HEK293 (cell line): ENCODE measurements at regions of chr6 and their contacts with region 1.

Region 1: DNA sequence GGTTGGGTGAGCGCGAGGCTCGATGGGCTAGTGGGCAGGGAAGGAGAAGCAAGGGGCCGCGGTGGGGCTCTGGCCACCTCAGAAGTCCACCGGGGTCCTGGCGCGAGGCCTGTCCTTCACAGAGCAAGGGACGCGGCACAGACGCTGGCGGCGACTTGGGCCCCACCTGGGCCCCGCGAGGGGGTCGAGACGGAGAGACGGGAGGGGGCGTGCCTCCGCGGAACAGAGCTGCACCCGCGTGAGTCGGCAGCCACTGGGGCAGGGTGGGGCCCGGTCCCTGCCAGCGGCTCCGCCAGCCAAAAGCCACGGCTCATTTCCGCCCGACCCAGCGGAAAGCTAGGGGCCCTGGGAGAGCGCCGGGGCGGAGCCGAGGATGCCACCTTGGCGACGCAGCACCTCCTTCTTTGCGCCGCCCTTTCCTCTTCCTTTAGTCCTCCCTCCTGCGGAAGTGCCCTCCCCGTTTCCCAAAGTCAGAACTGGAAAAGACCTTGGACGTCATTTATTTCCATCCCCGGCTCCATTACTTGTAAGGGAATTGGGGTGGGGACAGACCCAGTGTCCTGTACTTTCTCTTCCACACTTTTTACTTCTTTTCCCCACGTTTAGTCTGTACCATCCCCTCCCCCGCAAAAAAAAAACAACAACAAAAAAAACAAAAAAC is at the start of gene CUL7:
- H3K4me3 ChIP-seq: peak within 1 kb of the TSS; percentile 74
- H3K27ac ChIP-seq: peak within 1 kb of the TSS; percentile 85
- H3K4me1 ChIP-seq: peaks cover 9% of the 10 kb centered on the region
- CTCF ChIP-seq: peak; percentile 77; the same call in 1 of the 2 replicates

Region 2: GRCh38 chr6:43021270-43022047 is 32.2 kb before region 1 on chr6 and contains the start of gene RRP36:
- CTCF ChIA-PET with region 1: interaction called, 3 read pairs
- POLR2A ChIA-PET with region 1: interaction called, 20 read pairs
- H3K4me3 ChIP-seq: peak within 1 kb of the TSS; percentile 91
- H3K27ac ChIP-seq: peak within 1 kb of the TSS; percentile 86
- H3K4me1 ChIP-seq: peaks cover 9% of the 10 kb centered on the region
- CTCF ChIP-seq: no peak

Region 3: GRCh38 chr6:43035495-43036194 is 18.0 kb before region 1 on chr6:
- CTCF ChIA-PET with region 1: interaction called, 3 read pairs
- POLR2A ChIA-PET with region 1: interaction called, 14 read pairs
- H3K4me3 ChIP-seq: no peak overlapping the region
- H3K27ac ChIP-seq: 0 out of 2 replicates have a peak overlapping the region, but pooled peaks have one; percentile 37
- H3K4me1 ChIP-seq: no peaks in the 10 kb centered on the region
- CTCF ChIP-seq: no peak

Region 4: GRCh38 chr6:43075670-43076463 is 22.2 kb after region 1 on chr6 and contains the start of gene PTK7:
- CTCF ChIA-PET with region 1: interaction called, 15 read pairs
- POLR2A ChIA-PET with region 1: interaction called, 31 read pairs
- H3K4me3 ChIP-seq: peak within 1 kb of the TSS; percentile 88
- H3K27ac ChIP-seq: peak within 1 kb of the TSS; percentile 87
- H3K4me1 ChIP-seq: peaks cover 14% of the 10 kb centered on the region
- CTCF ChIP-seq: no peak

Region 5: GRCh38 chr6:43174263-43175112 is 120.8 kb after region 1 on chr6:
- CTCF ChIA-PET with region 1: no interaction called
- POLR2A ChIA-PET with region 1: interaction called, 11 read pairs
- H3K4me3 ChIP-seq: peak overlapping the region; percentile 43
- H3K27ac ChIP-seq: peak overlapping the region; percentile 98
- H3K4me1 ChIP-seq: peaks cover 15% of the 10 kb centered on the region
- CTCF ChIP-seq: peak; percentile 65